ENCODE measurements at regions of chr7 and their contacts with region 1.

Region 1: GRCh38 chr7:141844256-141844655 is 3.0 kb upstream of the PRSS37 start:
- DNase-seq: no peak
- ATAC-seq: no peak
- H3K4me3 ChIP-seq: no peak overlapping the region
- H3K27ac ChIP-seq: no peak overlapping the region
- H3K4me1 ChIP-seq: no peaks in the 10 kb centered on the region
- H3K27me3 ChIP-seq: no peaks in the 10 kb centered on the region
- CTCF ChIP-seq: no peak

Region 2: DNA sequence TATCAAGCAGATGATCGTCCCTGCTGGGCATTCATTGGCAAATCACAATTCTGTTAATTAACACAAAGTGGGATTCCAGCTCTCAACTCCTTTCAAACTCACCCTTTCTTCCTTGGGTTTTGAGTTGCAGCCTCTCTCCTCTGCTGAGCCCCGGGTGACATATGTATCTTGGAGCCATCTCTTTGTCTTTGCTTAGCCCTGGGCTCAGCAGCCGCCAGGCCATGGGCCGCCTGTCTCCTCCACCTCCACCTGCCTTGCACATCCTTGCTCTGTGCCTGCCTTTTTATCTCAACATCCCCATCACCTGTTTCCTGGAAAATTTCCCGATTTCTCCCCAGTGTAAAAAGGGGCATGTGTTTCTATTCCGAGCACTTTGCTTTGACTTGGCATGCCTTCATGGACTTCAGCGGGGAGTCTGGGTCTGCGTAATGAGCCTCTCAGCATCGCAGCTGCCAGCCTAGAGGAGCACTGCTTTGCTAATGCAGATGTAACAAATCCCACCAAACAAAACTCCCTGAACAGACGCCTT is 434.4 kb before region 1 on chr7:
- intact Hi-C with region 1: loop called in 1 of 2 experiments (anchors 10 kb)
- DNase-seq: no peak
- ATAC-seq: no peak
- H3K4me3 ChIP-seq: no peak overlapping the region
- H3K27ac ChIP-seq: no peak overlapping the region
- H3K4me1 ChIP-seq: no peaks in the 10 kb centered on the region
- H3K27me3 ChIP-seq: peaks cover 0 to 5% of the 10 kb centered on the region in 2 donors
- CTCF ChIP-seq: no peak

Region 3: GRCh38 chr7:141748401-141748800 is 95.9 kb before region 1 on chr7:
- intact Hi-C with region 1: no loop called
- DNase-seq: no peak
- ATAC-seq: no peak
- H3K4me3 ChIP-seq: no peak overlapping the region
- H3K27ac ChIP-seq: no peak overlapping the region
- H3K4me1 ChIP-seq: no peaks in the 10 kb centered on the region
- H3K27me3 ChIP-seq: no peaks in the 10 kb centered on the region
- CTCF ChIP-seq: no peak